ENCODE measurements at regions of chr2 and their contacts with region 1.

Region 1: DNA sequence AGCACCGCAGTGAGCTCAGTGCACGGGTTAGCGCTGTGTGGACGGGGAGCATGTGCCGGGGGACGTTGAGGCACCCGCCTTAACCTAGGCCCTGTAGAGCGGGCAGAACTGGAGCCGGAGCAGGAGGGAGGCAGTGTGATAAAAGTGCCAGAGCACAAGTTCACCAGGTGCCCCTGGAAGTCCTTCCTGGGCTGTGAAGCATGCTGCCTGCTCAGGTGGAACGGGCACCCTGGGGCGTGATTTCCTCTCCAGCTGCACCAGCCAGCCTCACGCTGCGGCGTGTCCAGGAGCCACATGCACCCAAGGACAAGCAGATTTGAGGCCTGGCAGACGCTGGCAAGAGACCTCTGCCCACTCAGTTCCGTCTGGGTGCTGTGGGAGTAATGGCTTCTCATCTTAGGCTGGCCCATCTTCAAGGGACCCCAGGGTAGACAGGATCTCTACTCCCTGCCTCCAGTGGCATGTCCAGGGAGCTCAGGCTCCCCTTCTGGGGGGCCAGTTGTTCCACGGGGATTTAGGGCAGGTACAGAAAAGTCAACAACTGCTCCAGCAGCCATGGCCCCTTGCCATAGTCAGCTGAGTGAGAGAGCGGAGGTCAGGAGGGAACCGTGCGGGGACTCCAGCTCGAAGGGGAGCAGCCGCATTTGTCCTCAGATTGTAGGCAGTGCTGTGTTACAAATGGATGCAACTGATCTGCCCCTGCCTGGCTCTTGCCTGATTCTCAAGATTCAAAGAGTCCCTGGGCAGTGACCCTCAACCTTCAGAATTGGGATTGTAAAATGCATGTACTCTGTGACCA is 50.1 kb downstream of the ITGB1BP1 start:
- DNase-seq: no peak
- H3K4me3 ChIP-seq: no peak overlapping the region
- H3K27ac ChIP-seq: no peak overlapping the region; a peak in 1 of 4 replicates
- H3K4me1 ChIP-seq: peaks cover 0 to 25% of the 10 kb centered on the region in 2 experiments; a peak in 3 of 4 replicates
- H3K27me3 ChIP-seq: no peaks in the 10 kb centered on the region
- CTCF ChIP-seq: no peak
- EP300 ChIP-seq: no peak
- RAD21 ChIP-seq: no peak

Region 2: GRCh38 chr2:8774371-8774770 is 598.9 kb before region 1 on chr2:
- CTCF ChIA-PET with region 1: no interaction called
- POLR2A ChIA-PET with region 1: no interaction called
- DNase-seq: no peak
- H3K4me3 ChIP-seq: no peak overlapping the region
- H3K27ac ChIP-seq: no peak overlapping the region
- H3K4me1 ChIP-seq: no peaks in the 10 kb centered on the region
- H3K27me3 ChIP-seq: no peaks in the 10 kb centered on the region
- CTCF ChIP-seq: no peak
- EP300 ChIP-seq: no peak
- RAD21 ChIP-seq: no peak

Region 3: GRCh38 chr2:9333591-9334171 is 39.6 kb before region 1 on chr2:
- CTCF ChIA-PET with region 1: interaction called, 12 read pairs
- POLR2A ChIA-PET with region 1: no interaction called
- DNase-seq: peak; percentile 70
- H3K4me3 ChIP-seq: no peak overlapping the region
- H3K27ac ChIP-seq: peak overlapping the region; percentile 7 to 45
- H3K4me1 ChIP-seq: peaks cover 26 to 39% of the 10 kb centered on the region in 2 experiments
- H3K27me3 ChIP-seq: no peaks in the 10 kb centered on the region
- CTCF ChIP-seq: peak; percentile 91
- EP300 ChIP-seq: no peak
- RAD21 ChIP-seq: peak; percentile 90

Region 4: DNA sequence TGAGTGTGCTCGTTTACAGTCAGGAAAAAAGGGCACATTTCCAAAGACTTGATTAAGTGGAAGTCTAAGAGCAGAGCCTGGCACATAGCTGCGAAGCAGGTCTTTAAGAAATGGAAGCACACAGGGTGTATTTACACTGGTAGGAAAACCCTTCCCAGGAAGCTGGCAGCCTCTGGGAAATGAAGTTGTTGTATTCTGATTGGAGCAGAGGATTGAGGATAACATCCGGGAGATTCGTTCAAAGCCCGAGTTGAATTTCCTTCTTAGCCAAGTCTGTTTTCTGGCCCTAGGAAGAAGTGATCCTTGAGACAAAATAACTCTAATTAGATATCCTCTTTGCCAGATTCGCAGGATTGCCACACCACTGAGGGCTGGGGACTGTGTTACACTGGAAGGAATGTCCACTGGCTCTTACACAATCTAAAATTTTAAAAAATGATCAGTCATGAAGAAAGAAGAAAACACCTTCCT is 25.8 kb before region 1 on chr2:
- CTCF ChIA-PET with region 1: interaction called, 10 read pairs
- POLR2A ChIA-PET with region 1: no interaction called
- DNase-seq: no peak
- H3K4me3 ChIP-seq: no peak overlapping the region
- H3K27ac ChIP-seq: no peak overlapping the region
- H3K4me1 ChIP-seq: no peaks in the 10 kb centered on the region; a peak in 1 of 4 replicates
- H3K27me3 ChIP-seq: no peaks in the 10 kb centered on the region
- CTCF ChIP-seq: no peak
- EP300 ChIP-seq: no peak
- RAD21 ChIP-seq: no peak

Region 5: DNA sequence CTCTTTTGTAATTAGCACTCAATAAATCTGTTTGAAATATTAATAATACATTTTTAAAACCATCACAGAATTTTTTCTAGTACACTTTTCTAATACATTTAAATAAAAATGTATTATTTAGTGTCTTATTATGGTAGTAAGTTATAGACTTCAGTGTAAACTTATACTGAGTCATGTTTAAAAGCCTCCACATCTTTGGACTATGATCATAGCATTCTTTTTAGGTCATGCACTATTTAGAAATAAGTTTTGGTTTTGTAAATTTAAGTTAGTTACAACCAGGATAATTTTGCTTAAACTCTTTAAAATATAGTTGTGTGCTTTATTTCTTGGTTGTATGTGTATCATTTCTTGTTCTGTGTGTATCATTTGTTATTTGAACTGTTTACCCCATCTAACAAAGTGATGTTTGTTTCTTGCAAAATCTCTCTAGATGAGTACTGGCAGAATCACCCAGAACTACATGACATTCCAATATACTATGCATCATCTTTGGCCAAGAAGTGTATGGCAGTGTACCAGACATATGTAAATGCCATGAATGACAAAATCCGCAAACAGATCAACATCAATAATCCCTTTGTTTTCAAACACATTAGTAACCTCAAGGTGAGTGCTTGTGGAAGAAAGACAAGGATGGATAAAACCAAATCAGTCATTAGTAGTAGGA is 66.9 kb after region 1 on chr2:
- CTCF ChIA-PET with region 1: no interaction called
- POLR2A ChIA-PET with region 1: no interaction called
- DNase-seq: no peak
- H3K4me3 ChIP-seq: no peak overlapping the region
- H3K27ac ChIP-seq: peak overlapping the region in 1 of 2 experiments; percentile 62; a peak in 2 of 4 replicates
- H3K4me1 ChIP-seq: peaks cover 0 to 12% of the 10 kb centered on the region in 2 experiments; a peak in 1 of 4 replicates
- H3K27me3 ChIP-seq: no peaks in the 10 kb centered on the region
- CTCF ChIP-seq: no peak
- EP300 ChIP-seq: no peak
- RAD21 ChIP-seq: no peak

Region 6: DNA sequence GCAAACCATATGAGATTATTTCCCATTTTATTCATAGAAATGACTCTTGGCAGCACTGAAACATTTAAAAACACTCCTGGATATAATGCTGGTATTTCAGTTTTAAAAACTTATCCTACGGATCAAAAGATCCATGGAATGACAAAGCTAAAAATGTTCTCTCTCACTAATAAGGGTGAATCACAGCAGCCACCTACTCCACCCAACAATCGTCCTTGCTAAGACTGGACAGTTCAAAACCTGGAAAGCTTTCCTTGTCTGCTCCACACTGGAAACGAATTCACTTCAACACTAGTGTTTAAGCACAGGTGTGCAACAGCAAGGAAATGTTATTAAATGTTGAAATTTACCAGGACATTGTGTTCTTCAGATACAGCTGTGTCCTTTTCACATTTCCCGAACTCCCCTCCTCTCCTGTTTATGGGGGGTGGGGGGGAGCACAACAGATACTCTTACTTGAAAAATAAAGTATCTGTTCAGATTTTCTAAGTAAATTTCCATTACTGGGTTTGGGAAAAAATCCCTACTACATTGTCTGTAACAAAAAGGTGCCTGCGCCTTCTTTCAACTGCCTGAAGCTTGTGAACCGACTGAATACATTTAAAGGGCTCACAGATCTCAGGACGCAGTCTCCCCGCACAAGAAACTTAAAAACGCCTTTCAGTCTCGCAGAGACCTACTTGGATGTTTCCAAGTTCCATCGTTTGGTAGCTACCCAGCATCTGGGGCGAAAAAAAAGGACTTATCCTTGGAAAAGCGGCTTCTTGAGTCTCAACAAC is 256.1 kb after region 1 on chr2:
- CTCF ChIA-PET with region 1: no interaction called
- POLR2A ChIA-PET with region 1: no interaction called
- DNase-seq: no peak
- H3K4me3 ChIP-seq: peak overlapping the region; percentile 84
- H3K27ac ChIP-seq: peak overlapping the region; percentile 74 to 95
- H3K4me1 ChIP-seq: peaks cover 15 to 29% of the 10 kb centered on the region in 2 experiments; a peak in 3 of 4 replicates
- H3K27me3 ChIP-seq: no peaks in the 10 kb centered on the region
- CTCF ChIP-seq: no peak
- EP300 ChIP-seq: no peak
- RAD21 ChIP-seq: no peak

Region 7: DNA sequence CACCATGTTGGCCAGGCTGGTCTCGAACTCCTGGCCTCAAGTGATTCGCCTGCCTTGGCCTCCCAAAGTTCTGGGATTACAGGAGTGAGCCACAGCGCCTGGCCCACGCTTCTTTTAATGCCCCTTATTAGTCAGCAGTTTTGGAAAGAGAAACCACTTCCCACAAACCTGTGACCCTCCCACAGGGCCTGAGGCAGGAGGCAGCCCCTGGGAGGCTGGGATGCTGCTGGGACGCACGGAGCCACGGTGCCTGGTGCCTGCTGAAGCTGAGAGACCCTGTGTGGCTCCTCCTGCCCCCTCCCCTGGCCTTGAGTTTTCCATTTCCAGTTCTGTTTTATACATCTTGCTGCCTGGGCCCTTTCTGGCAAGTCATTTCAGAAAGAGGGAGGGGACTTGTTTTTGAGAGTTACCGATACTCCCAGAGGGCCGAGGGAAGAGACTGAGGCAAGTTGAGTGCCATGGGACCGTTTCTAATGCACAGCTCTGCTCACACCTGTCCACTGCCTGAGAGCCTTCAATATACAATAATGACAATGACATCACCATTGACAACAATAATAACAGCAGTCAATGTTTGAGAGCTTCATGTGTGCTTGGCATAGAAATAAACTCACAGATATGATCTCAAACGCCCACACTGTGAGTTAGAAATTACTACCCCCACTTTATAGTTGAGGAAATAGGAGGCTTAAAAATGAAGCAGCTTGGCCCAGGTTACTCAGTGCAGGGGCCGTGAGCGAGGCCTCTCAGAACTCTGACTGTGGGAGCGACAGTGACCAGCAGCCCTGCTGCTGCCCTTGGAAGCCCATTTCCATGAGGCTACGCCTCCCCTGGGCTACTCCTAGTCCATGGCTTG is 335.6 kb after region 1 on chr2:
- CTCF ChIA-PET with region 1: no interaction called
- POLR2A ChIA-PET with region 1: no interaction called
- DNase-seq: no peak
- H3K4me3 ChIP-seq: no peak overlapping the region
- H3K27ac ChIP-seq: no peak overlapping the region
- H3K4me1 ChIP-seq: peaks cover 0 to 3% of the 10 kb centered on the region in 2 experiments; a peak in 1 of 4 replicates
- H3K27me3 ChIP-seq: no peaks in the 10 kb centered on the region
- CTCF ChIP-seq: no peak
- EP300 ChIP-seq: no peak
- RAD21 ChIP-seq: no peak

Measured in SK-N-SH (cell line).